ENCODE measurements at regions of chr7 and their contacts with region 1.

Region 1: GRCh38 chr7:5435289-5436002 is 11.8 kb upstream of the TNRC18 start:
- DNase-seq: peak; percentile 87
- H3K4me3 ChIP-seq: peak overlapping the region; percentile 37
- H3K27ac ChIP-seq: peak overlapping the region; percentile 71
- H3K4me1 ChIP-seq: peaks cover 22% of the 10 kb centered on the region
- CTCF ChIP-seq: no peak

Region 2: DNA sequence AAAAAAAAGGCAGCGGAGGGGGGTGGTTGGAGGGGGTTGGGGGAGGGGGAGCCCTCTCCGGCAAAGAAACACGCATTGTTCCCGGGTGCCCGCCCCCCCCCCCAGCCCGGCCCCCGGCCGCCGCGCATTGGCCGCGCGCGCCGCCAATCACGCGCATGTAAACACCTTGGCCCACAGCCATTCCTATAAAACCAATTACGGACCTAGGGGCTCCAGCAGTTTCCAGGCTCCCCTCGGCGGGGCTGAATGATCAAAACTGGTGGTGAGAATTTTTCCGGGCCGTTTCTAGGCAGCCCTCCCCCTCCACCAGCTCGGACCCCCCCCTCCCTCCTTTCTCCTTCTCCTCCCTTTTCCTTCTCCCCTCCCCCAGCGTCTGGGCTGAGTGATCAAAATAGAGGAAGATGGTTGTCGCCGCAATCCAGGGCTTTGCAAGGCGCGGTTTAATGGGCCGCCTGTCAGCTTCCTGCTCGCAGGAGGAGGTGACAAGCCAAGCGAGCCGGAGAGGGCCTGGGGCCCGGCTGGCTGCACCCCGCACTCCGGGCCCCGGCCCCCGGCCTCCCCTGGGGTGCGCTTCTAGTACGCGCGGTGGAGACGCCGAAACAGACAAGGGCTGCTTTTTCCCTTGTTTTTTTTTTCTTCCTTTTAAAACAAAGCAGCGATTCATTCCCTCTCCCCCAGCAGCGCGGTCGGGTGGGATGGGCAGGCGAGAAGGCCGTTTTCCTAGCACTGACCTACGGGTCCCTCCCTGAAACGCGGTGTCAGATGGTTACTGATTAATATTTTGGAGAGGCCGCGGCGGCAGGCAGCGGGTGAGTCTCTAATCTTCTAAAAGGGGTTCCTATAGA is 11.4 kb before region 1 on chr7:
- CTCF ChIA-PET with region 1: no interaction called
- POLR2A ChIA-PET with region 1: interaction called, 5 read pairs
- intact Hi-C with region 1: loop called (anchors 1 kb)
- DNase-seq: peak; percentile 87
- H3K4me3 ChIP-seq: peak overlapping the region; percentile 81
- H3K27ac ChIP-seq: no peak overlapping the region
- H3K4me1 ChIP-seq: peaks cover 27% of the 10 kb centered on the region
- CTCF ChIP-seq: no peak

Region 3: GRCh38 chr7:5450549-5451372 is 15.3 kb after region 1 on chr7:
- CTCF ChIA-PET with region 1: no interaction called
- POLR2A ChIA-PET with region 1: no interaction called
- intact Hi-C with region 1: no loop called
- DNase-seq: peak; percentile 67
- H3K4me3 ChIP-seq: no peak overlapping the region
- H3K27ac ChIP-seq: no peak overlapping the region
- H3K4me1 ChIP-seq: no peaks in the 10 kb centered on the region
- CTCF ChIP-seq: peak; percentile 81

Region 4: DNA sequence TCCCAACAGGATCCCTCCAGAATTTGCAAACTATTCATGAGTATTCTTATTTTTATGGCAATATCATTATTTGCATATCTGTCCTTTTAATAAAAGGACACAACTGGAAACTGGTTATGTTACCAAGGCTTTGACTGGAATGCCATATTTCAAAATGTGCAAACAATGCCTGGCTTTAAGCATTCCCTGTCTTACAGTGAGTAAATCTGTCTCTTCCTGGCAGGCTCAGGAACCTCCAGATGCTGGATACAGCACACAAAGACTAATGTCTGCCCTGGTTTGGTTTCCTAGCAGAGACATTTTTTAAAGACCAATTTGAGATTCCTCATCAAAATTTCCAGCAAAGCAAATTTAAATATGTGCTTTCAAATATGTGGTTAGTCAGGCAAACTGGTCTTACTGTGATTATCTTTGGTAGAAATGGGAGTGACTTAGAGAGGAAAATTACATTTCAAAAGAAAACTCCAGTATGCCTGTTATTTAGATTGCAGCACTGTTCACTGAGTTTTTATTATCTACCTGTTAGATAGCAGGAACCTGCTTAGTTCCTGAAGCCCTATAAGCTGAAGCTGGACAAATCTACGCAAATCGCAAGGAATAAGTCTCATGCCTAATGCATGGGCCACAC is 314.7 kb after region 1 on chr7:
- CTCF ChIA-PET with region 1: no interaction called
- POLR2A ChIA-PET with region 1: no interaction called
- intact Hi-C with region 1: no loop called
- DNase-seq: no peak
- H3K4me3 ChIP-seq: no peak overlapping the region
- H3K27ac ChIP-seq: no peak overlapping the region
- H3K4me1 ChIP-seq: no peaks in the 10 kb centered on the region
- CTCF ChIP-seq: no peak